ENCODE measurements at regions of chr6 and their contacts with region 1.

Region 1: GRCh38 chr6:119147101-119148053 is 68.9 kb upstream of the FAM184A start:
- DNase-seq: peak; percentile 91
- H3K4me3 ChIP-seq: no peak overlapping the region
- H3K27ac ChIP-seq: peak overlapping the region in 3 of 4 donors; percentile 44 to 77 (median 53)
- H3K4me1 ChIP-seq: peaks cover 14 to 41% (median 28%) of the 10 kb centered on the region in 4 donors
- H3K27me3 ChIP-seq: no peaks in the 10 kb centered on the region
- CTCF ChIP-seq: no peak
- EP300 ChIP-seq: no peak
- POLR2A ChIP-seq: no peak

Region 2: GRCh38 chr6:119090256-119090655 is 57.1 kb before region 1 on chr6:
- intact Hi-C with region 1: no loop called
- DNase-seq: peak; percentile 24
- H3K4me3 ChIP-seq: no peak overlapping the region
- H3K27ac ChIP-seq: no peak overlapping the region
- H3K4me1 ChIP-seq: no peaks in the 10 kb centered on the region
- H3K27me3 ChIP-seq: no peaks in the 10 kb centered on the region
- CTCF ChIP-seq: no peak
- EP300 ChIP-seq: no peak
- POLR2A ChIP-seq: no peak

Region 3: GRCh38 chr6:119105282-119105681 is 42.1 kb before region 1 on chr6:
- intact Hi-C with region 1: no loop called
- DNase-seq: no peak
- H3K4me3 ChIP-seq: no peak overlapping the region
- H3K27ac ChIP-seq: no peak overlapping the region
- H3K4me1 ChIP-seq: peaks cover 0 to 6% (median 3%) of the 10 kb centered on the region in 4 donors
- H3K27me3 ChIP-seq: no peaks in the 10 kb centered on the region
- CTCF ChIP-seq: no peak
- EP300 ChIP-seq: no peak
- POLR2A ChIP-seq: no peak

Region 4: DNA sequence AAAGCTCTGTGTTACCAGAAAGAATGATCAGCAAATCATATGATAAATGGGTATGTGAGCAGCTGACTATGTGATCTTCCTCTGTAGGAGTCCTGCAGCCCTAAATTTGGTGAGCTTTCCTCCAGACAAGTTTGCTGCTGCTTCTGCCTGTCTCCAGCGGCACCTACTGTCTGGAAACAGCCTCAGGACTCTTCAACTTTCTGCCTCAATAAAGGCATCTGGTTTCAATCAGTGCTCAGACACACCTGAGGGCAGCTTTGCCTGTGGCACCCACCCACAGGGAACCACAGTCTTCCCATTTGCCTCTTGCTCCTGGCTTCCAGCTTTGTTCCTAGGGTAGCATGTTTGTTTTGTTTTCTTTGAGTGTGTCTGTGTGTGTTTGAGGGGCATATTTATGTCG is 930.1 kb after region 1 on chr6:
- intact Hi-C with region 1: loop called (anchors 10 kb)
- DNase-seq: no peak
- H3K4me3 ChIP-seq: no peak overlapping the region
- H3K27ac ChIP-seq: no peak overlapping the region
- H3K4me1 ChIP-seq: no peaks in the 10 kb centered on the region
- H3K27me3 ChIP-seq: no peaks in the 10 kb centered on the region
- CTCF ChIP-seq: peak in 2 of 3 experiments; percentile 26 to 27
- EP300 ChIP-seq: no peak
- POLR2A ChIP-seq: no peak

Measured in esophagus muscularis mucosa (tissue), 4 donors.